ENCODE measurements at regions of chr16 and their contacts with region 1.

Region 1: GRCh38 chr16:81366316-81366932 is 51.7 kb downstream of the GAN start:
- DNase-seq: peak; percentile 11
- H3K4me3 ChIP-seq: no peak overlapping the region
- H3K27ac ChIP-seq: no peak overlapping the region
- H3K27me3 ChIP-seq: no peaks in the 10 kb centered on the region
- CTCF ChIP-seq: peak; percentile 51

Region 2: GRCh38 chr16:81163671-81164070 is 202.8 kb before region 1 on chr16:
- in situ Hi-C with region 1: no loop called
- DNase-seq: no peak
- H3K4me3 ChIP-seq: no peak overlapping the region
- H3K27ac ChIP-seq: no peak overlapping the region
- H3K27me3 ChIP-seq: no peaks in the 10 kb centered on the region
- CTCF ChIP-seq: no peak

Region 3: GRCh38 chr16:81737885-81738786 is 371.7 kb after region 1 on chr16:
- in situ Hi-C with region 1: loop called (anchors 25 kb)
- DNase-seq: peak; percentile 62
- H3K4me3 ChIP-seq: peak overlapping the region; percentile 24
- H3K27ac ChIP-seq: no peak overlapping the region
- H3K27me3 ChIP-seq: no peaks in the 10 kb centered on the region
- CTCF ChIP-seq: peak; percentile 85

Measured in brain microvascular endothelial cell (primary cell).